ENCODE measurements at regions of chr1 and their contacts with region 1.

Region 1: GRCh38 chr1:240732390-240732789 is 120.4 kb upstream of the GREM2 start:
- DNase-seq: no peak
- ATAC-seq: no peak
- H3K4me3 Mint-ChIP-seq: no peak overlapping the region
- H3K27ac Mint-ChIP-seq: no peak overlapping the region
- H3K4me1 Mint-ChIP-seq: no peaks in the 10 kb centered on the region
- H3K27me3 Mint-ChIP-seq: no peaks in the 10 kb centered on the region
- CTCF ChIP-seq: no peak

Region 2: DNA sequence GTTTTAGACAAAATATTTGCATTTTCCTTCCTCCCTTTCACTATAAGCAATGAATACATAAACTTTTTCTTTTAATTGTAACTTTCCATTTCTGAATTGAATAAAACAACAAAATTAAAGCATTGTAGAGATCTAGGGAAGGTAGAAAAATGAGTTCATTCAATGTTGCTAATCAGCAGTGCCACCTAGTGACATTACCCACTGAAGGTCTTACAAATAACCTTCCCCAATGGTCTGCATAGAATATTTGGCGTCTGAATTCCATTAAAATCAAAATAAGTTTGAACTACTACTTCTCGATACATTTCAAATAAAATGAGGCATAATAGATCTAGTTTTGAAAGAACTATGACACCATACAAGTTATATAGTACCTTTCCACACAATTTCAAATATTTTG is 767.5 kb after region 1 on chr1:
- CTCF ChIA-PET with region 1: no interaction called
- POLR2A ChIA-PET with region 1: no interaction called
- intact Hi-C with region 1: loop called (anchors 1 kb)
- DNase-seq: no peak
- ATAC-seq: no peak
- H3K4me3 Mint-ChIP-seq: no peak overlapping the region
- H3K27ac Mint-ChIP-seq: no peak overlapping the region
- H3K4me1 Mint-ChIP-seq: no peaks in the 10 kb centered on the region
- H3K27me3 Mint-ChIP-seq: no peaks in the 10 kb centered on the region
- CTCF ChIP-seq: no peak

Region 3: GRCh38 chr1:241627453-241628259 is 895.3 kb after region 1 on chr1:
- CTCF ChIA-PET with region 1: no interaction called
- POLR2A ChIA-PET with region 1: no interaction called
- intact Hi-C with region 1: loop called (anchors 5 kb)
- DNase-seq: no peak
- ATAC-seq: peak; percentile 83
- H3K4me3 Mint-ChIP-seq: peak overlapping the region; percentile 66
- H3K27ac Mint-ChIP-seq: peak overlapping the region; percentile 86
- H3K4me1 Mint-ChIP-seq: peaks cover 48% of the 10 kb centered on the region
- H3K27me3 Mint-ChIP-seq: no peaks in the 10 kb centered on the region
- CTCF ChIP-seq: peak; percentile 17

Region 4: GRCh38 chr1:241895013-241895412 is 1162.6 kb after region 1 on chr1:
- CTCF ChIA-PET with region 1: no interaction called
- POLR2A ChIA-PET with region 1: no interaction called
- intact Hi-C with region 1: loop called (anchors 5 kb)
- DNase-seq: no peak
- ATAC-seq: no peak
- H3K4me3 Mint-ChIP-seq: no peak overlapping the region
- H3K27ac Mint-ChIP-seq: no peak overlapping the region
- H3K4me1 Mint-ChIP-seq: peaks cover 15% of the 10 kb centered on the region
- H3K27me3 Mint-ChIP-seq: no peaks in the 10 kb centered on the region
- CTCF ChIP-seq: no peak

Region 5: GRCh38 chr1:242454262-242455045 is 1722.1 kb after region 1 on chr1:
- CTCF ChIA-PET with region 1: no interaction called
- POLR2A ChIA-PET with region 1: no interaction called
- intact Hi-C with region 1: loop called (anchors 5 kb)
- DNase-seq: no peak
- ATAC-seq: no peak
- H3K4me3 Mint-ChIP-seq: no peak overlapping the region
- H3K27ac Mint-ChIP-seq: no peak overlapping the region
- H3K4me1 Mint-ChIP-seq: peaks cover 2% of the 10 kb centered on the region
- H3K27me3 Mint-ChIP-seq: peaks cover 10% of the 10 kb centered on the region
- CTCF ChIP-seq: no peak